CD8-positive, alpha-beta T cell (primary cell): ENCODE measurements at regions of chr19 and their contacts with region 1.

Region 1: GRCh38 chr19:48993175-48994034 is at the starts of genes GYS1 and RUVBL2:
- DNase-seq: peak; percentile 98 to 100 (median 99)
- ATAC-seq: peak; percentile 93
- H3K4me3 ChIP-seq: peak within 1 kb of the TSS; percentile 77 to 80
- H3K4me3 Mint-ChIP-seq: peak within 1 kb of the TSS; percentile 91
- H3K27ac ChIP-seq: peak within 1 kb of the TSS; percentile 66 to 83
- H3K27ac Mint-ChIP-seq: peak within 1 kb of the TSS; percentile 93
- H3K4me1 ChIP-seq: peaks cover 22% of the 10 kb centered on the region
- H3K4me1 Mint-ChIP-seq: peaks cover 42% of the 10 kb centered on the region
- H3K27me3 ChIP-seq: no peaks in the 10 kb centered on the region
- H3K27me3 Mint-ChIP-seq: no peaks in the 10 kb centered on the region
- CTCF ChIP-seq: peak; percentile 98
- total RNA-seq, gene GYS1: 9.5 to 11.9 TPM
- total RNA-seq, gene RUVBL2: 10.5 to 11.5 TPM

Region 2: DNA sequence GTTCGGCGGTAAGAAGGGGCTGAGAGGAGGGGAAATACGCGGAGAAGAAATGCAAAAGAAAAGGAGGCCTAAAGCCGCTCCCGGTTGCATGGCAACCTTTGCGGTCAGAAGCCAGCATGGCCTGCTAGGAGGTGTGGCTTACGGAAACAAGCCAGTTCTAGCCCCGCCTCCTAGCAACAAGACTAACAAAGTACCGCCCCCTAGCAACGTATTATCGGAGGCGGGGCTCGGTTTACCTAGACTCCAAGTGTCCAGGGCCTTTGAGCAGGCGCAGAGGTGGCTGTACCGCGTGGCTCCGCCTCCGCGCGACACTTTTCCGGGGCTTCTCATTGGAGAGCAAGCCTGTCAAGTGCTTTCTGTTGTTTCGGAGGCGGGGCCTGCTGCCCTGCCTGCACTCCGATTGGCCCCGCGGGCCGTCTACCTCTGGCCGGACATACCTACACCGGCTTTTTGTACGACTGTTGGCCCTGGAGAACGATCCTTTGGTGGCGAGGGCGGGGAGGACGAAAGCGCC is 524.6 kb before region 1 on chr19:
- CTCF ChIA-PET with region 1: no interaction called
- POLR2A ChIA-PET with region 1: no interaction called
- intact Hi-C with region 1: loop called (anchors 1 to 2 kb)
- DNase-seq: peak; percentile 98 to 100 (median 99)
- ATAC-seq: peak; percentile 85
- H3K4me3 ChIP-seq: peak overlapping the region; percentile 83 to 95
- H3K4me3 Mint-ChIP-seq: peak overlapping the region; percentile 90
- H3K27ac ChIP-seq: peak overlapping the region; percentile 75 to 90
- H3K27ac Mint-ChIP-seq: peak overlapping the region; percentile 85
- H3K4me1 ChIP-seq: peaks cover 15% of the 10 kb centered on the region
- H3K4me1 Mint-ChIP-seq: peaks cover 21% of the 10 kb centered on the region
- H3K27me3 ChIP-seq: no peaks in the 10 kb centered on the region
- H3K27me3 Mint-ChIP-seq: no peaks in the 10 kb centered on the region
- CTCF ChIP-seq: no peak

Region 3: DNA sequence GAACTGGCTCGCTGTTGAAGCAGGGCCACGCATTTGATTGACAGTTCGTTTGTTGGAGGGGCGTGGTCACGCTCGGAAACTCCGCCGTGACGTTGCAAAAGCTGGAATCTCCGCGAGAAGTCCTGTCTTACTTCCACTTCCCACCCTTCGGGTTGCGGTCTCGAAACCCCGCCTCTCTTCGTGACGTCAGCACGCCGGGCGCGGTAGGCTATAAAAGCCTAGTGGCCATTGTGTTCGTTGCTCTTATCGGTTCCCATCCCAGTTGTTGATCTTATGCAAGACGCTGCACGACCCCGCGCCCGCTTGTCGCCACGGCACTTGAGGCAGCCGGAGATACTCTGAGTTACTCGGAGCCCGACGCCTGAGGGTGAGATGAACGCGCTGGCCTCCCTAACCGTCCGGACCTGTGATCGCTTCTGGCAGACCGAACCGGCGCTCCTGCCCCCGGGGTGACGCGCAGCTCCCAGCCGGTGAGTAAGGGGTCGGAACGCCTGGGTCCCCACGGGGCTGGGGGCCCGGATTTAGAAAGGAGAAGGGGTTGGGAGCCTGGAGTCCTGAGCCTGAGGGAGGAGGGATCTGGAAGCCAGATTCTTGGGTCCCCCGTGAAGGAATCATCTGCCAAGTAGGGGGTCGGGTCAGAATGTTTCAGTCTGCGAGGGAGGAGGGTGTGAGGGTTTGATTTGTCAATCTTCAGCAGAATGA is 121.1 kb before region 1 on chr19 and contains the start of gene PPP1R15A:
- CTCF ChIA-PET with region 1: no interaction called
- POLR2A ChIA-PET with region 1: interaction called, 4 read pairs
- intact Hi-C with region 1: loop called in 1 of 2 experiments (anchors 1 kb)
- DNase-seq: peak; percentile 95 to 99 (median 98)
- ATAC-seq: peak; percentile 41
- H3K4me3 ChIP-seq: peak within 1 kb of the TSS; percentile 88 to 90
- H3K4me3 Mint-ChIP-seq: peak within 1 kb of the TSS; percentile 97
- H3K27ac ChIP-seq: peak within 1 kb of the TSS; percentile 98 to 99
- H3K27ac Mint-ChIP-seq: peak within 1 kb of the TSS; percentile 100
- H3K4me1 ChIP-seq: peaks cover 32% of the 10 kb centered on the region
- H3K4me1 Mint-ChIP-seq: peaks cover 34% of the 10 kb centered on the region
- H3K27me3 ChIP-seq: no peaks in the 10 kb centered on the region
- H3K27me3 Mint-ChIP-seq: no peaks in the 10 kb centered on the region
- CTCF ChIP-seq: no peak
- total RNA-seq, gene PPP1R15A: 398 to 399 TPM

Region 4: GRCh38 chr19:48887861-48888612 is 105.4 kb before region 1 on chr19:
- CTCF ChIA-PET with region 1: no interaction called
- POLR2A ChIA-PET with region 1: no interaction called
- intact Hi-C with region 1: no loop called
- DNase-seq: no peak
- ATAC-seq: no peak
- H3K4me3 ChIP-seq: no peak overlapping the region
- H3K4me3 Mint-ChIP-seq: no peak overlapping the region
- H3K27ac ChIP-seq: no peak overlapping the region
- H3K27ac Mint-ChIP-seq: no peak overlapping the region
- H3K4me1 ChIP-seq: no peaks in the 10 kb centered on the region
- H3K4me1 Mint-ChIP-seq: no peaks in the 10 kb centered on the region
- H3K27me3 ChIP-seq: peaks cover 0 to 2% of the 10 kb centered on the region in 2 experiments
- H3K27me3 Mint-ChIP-seq: peaks cover 15% of the 10 kb centered on the region
- CTCF ChIP-seq: no peak

Region 5: DNA sequence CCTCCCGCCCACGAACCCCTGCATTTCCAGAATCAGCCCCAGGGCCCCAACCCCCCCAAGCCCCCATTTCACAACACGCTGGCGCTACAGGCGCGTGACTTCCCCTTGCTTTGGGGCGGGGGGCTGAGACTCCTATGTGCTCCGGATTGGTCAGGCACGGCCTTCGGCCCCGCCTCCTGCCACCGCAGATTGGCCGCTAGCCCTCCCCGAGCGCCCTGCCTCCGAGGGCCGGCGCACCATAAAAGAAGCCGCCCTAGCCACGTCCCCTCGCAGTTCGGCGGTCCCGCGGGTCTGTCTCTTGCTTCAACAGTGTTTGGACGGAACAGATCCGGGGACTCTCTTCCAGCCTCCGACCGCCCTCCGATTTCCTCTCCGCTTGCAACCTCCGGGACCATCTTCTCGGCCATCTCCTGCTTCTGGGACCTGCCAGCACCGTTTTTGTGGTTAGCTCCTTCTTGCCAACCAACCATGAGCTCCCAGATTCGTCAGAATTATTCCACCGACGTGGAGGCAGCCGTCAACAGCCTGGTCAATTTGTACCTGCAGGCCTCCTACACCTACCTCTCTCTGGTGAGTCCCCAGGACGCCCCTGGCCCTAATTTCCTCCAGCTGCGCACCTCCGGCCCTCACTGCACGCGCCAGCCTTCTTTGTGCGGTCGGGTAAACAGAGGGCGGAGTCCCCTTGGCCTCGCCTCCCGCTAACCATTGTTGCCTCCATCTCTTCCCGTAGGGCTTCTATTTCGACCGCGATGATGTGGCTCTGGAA is 28.2 kb before region 1 on chr19 and contains the start of gene FTL:
- CTCF ChIA-PET with region 1: interaction called, 11 read pairs
- POLR2A ChIA-PET with region 1: interaction called, 32 read pairs
- intact Hi-C with region 1: loop called in 1 of 2 experiments (anchors 1 kb)
- DNase-seq: peak; percentile 71 to 96 (median 88)
- ATAC-seq: peak; percentile 73
- H3K4me3 ChIP-seq: peak within 1 kb of the TSS; percentile 83 to 98
- H3K4me3 Mint-ChIP-seq: peak within 1 kb of the TSS; percentile 99
- H3K27ac ChIP-seq: peak within 1 kb of the TSS; percentile 84 to 90
- H3K27ac Mint-ChIP-seq: peak within 1 kb of the TSS; percentile 99
- H3K4me1 ChIP-seq: peaks cover 49% of the 10 kb centered on the region
- H3K4me1 Mint-ChIP-seq: peaks cover 60% of the 10 kb centered on the region
- H3K27me3 ChIP-seq: no peaks in the 10 kb centered on the region
- H3K27me3 Mint-ChIP-seq: no peaks in the 10 kb centered on the region
- CTCF ChIP-seq: no peak
- total RNA-seq, gene FTL: 665 to 668 TPM

Region 6: GRCh38 chr19:49017666-49018351 is 24.4 kb after region 1 on chr19:
- CTCF ChIA-PET with region 1: interaction called, 20 read pairs
- POLR2A ChIA-PET with region 1: interaction called, 9 read pairs
- intact Hi-C with region 1: loop called (anchors 2 kb)
- DNase-seq: peak; percentile 50 to 81 (median 72)
- ATAC-seq: peak; percentile 86
- H3K4me3 ChIP-seq: peak overlapping the region; percentile 62 to 71
- H3K4me3 Mint-ChIP-seq: peak overlapping the region; percentile 84
- H3K27ac ChIP-seq: peak overlapping the region; percentile 7 to 39
- H3K27ac Mint-ChIP-seq: no peak overlapping the region
- H3K4me1 ChIP-seq: peaks cover 20% of the 10 kb centered on the region
- H3K4me1 Mint-ChIP-seq: peaks cover 28% of the 10 kb centered on the region
- H3K27me3 ChIP-seq: peaks cover 0 to 2% of the 10 kb centered on the region in 2 experiments
- H3K27me3 Mint-ChIP-seq: no peaks in the 10 kb centered on the region
- CTCF ChIP-seq: peak; percentile 71

Region 7: DNA sequence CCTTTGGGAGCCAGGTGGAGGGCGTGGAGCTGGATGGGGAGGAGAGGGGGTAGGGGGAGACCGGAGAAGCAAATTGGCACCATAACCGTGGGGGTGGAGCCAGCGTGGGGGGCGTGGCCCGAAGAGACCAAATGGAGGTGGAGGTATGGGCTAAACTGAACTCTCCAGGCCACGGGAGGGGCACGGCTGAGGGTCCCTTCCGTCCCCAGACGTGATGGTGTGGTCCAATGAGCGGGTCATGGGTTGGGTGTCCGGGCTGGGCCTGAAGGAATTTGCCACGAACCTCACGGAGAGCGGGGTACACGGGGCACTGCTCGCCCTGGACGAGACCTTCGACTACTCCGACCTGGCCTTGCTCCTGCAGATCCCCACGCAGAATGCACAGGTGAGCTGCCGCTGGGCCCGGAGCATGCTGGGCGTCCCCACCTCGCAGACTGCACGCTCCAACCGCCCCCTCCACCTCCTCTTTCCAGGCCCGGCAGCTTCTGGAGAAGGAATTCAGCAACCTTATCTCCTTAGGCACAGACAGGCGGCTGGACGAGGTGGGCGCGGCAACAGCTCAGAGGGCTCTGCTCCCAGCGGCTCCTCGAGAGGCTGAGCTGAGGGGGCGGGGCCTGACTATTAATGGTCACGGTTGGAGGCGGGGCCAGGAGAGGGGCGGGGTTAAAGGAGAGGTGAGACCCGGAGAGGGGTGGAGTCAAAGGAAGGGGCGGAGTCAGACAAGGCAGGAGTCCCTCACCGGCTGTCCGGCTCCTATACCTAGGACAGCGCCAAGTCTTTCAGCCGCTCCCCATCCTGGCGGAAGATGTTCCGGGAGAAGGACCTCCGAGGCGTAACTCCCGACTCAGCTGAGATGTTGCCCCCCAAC is 155.6 kb after region 1 on chr19:
- CTCF ChIA-PET with region 1: interaction called, 4 read pairs
- POLR2A ChIA-PET with region 1: no interaction called
- intact Hi-C with region 1: loop called (anchors 2 to 5 kb)
- DNase-seq: peak; percentile 53 to 86 (median 77)
- ATAC-seq: peak; percentile 61
- H3K4me3 ChIP-seq: peak overlapping the region; percentile 60 to 64
- H3K4me3 Mint-ChIP-seq: peak overlapping the region; percentile 78
- H3K27ac ChIP-seq: no peak overlapping the region
- H3K27ac Mint-ChIP-seq: no peak overlapping the region
- H3K4me1 ChIP-seq: peaks cover 47% of the 10 kb centered on the region
- H3K4me1 Mint-ChIP-seq: peaks cover 34% of the 10 kb centered on the region
- H3K27me3 ChIP-seq: peaks cover 36 to 39% of the 10 kb centered on the region in 2 experiments
- H3K27me3 Mint-ChIP-seq: peaks cover 65% of the 10 kb centered on the region
- CTCF ChIP-seq: no peak

Region 8: GRCh38 chr19:49877020-49877878 is 883.8 kb after region 1 on chr19 and contains the starts of genes AKT1S1 and TBC1D17:
- CTCF ChIA-PET with region 1: no interaction called
- POLR2A ChIA-PET with region 1: no interaction called
- intact Hi-C with region 1: loop called (anchors 2 kb)
- DNase-seq: peak; percentile 96 to 100 (median 97)
- ATAC-seq: peak; percentile 60
- H3K4me3 ChIP-seq: peak within 1 kb of the TSS; percentile 88 to 97
- H3K4me3 Mint-ChIP-seq: no peak within 1 kb of the TSS
- H3K27ac ChIP-seq: peak within 1 kb of the TSS; percentile 97 to 98
- H3K27ac Mint-ChIP-seq: no peak within 1 kb of the TSS
- H3K4me1 ChIP-seq: peaks cover 22% of the 10 kb centered on the region
- H3K4me1 Mint-ChIP-seq: peaks cover 29% of the 10 kb centered on the region
- H3K27me3 ChIP-seq: no peaks in the 10 kb centered on the region
- H3K27me3 Mint-ChIP-seq: no peaks in the 10 kb centered on the region
- CTCF ChIP-seq: no peak
- total RNA-seq, gene AKT1S1: 12.6 to 14.1 TPM
- total RNA-seq, gene TBC1D17: 31.1 to 31.2 TPM